ENCODE measurements at regions of chr5 and their contacts with region 1.

Region 1: DNA sequence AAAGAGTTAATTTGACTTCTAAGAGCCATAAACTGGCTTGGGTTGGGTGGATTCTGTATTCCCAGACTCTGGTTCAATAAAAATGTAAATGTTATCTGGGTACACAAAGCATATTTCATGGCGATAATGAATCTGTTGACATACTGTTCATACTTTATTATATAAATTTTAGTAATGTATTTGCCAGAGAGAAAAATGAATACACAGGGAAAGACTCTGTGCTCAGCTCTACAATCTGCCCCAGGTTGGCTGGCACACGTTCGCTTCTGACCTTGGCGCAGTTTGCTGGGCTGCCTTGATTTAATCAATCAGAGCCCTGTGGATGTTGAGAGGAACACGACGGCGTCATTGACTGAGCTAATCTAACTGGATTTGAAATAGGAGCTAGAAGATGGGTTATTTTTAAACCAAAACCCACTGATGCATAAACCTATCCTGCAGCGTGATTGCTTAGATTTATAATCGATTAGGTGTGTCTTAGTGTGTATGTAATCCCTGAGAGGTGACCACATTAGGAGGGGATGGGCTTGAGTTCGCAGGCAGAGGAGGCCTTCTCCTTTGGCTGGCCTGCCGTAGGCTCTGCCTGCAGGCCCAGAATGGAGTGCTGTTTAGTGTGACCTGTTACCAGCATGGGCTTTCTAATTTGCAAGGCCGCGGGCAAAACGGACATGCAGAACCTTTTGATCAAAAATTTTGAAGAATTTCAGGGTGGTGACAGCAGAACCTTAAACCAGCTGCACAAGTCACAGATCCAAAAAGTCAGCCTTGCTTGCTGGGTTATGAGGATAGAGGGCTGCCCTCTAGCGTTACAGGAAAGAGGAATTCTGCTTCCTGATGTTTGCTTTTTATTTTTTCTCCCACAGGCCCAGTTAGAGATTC is 3.9 kb upstream of the ADCY2 start:
- H3K4me3 ChIP-seq: no peak overlapping the region
- H3K27ac ChIP-seq: no peak overlapping the region
- H3K4me1 ChIP-seq: peaks cover 2% of the 10 kb centered on the region; the same call in 1 of the 2 replicates
- CTCF ChIP-seq: 0 out of 2 replicates have a peak, but pooled peaks have one; percentile 11

Region 2: DNA sequence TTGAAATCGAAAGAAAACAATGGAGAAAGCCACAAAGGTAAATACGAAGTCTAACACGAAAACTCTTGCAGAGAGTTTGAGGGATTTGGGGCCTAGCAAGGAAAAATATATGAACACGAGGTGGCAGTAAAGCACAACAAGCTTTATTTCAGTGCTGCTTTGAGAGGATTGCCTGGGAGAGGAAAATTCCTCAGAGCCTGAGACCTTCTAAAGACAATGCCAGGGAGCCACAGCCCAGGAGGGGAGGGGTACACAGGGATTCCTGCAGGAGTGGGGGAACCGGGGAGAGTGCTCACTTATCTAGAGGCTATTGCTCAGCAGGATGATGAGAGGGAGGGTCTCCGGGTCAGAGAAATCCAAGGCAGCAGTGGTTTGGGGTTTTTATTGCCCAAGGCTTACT is 131.0 kb before region 1 on chr5:
- CTCF ChIA-PET with region 1: interaction called, 11 read pairs
- POLR2A ChIA-PET with region 1: no interaction called
- H3K4me3 ChIP-seq: no peak overlapping the region
- H3K27ac ChIP-seq: no peak overlapping the region
- H3K4me1 ChIP-seq: no peaks in the 10 kb centered on the region
- CTCF ChIP-seq: peak; percentile 18; the same call in 1 of the 2 replicates

Measured in HEK293 (cell line).